ENCODE measurements at regions of chr2 and their contacts with region 1.

Region 1: DNA sequence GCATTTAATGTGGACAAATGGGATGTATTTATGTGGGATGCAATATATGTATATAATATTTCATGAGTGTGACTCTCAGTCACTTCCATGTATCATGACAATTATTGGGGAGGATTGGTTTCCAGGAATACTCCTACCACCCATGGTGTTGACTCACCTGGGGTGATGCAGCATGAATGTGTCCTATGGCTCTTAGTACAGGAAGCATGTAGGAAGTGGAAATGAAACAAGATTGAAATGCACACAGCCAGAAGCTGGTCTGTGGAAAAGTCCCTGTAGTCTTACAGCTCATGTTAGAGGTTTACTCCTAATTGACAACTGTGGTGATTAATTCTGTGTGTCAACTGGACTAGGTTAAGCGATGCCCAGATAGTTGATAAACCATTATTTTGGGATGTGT is 89.3 kb upstream of the HAAO start:
- DNase-seq: no peak
- H3K4me3 ChIP-seq: no peak overlapping the region
- CTCF ChIP-seq: no peak

Region 2: DNA sequence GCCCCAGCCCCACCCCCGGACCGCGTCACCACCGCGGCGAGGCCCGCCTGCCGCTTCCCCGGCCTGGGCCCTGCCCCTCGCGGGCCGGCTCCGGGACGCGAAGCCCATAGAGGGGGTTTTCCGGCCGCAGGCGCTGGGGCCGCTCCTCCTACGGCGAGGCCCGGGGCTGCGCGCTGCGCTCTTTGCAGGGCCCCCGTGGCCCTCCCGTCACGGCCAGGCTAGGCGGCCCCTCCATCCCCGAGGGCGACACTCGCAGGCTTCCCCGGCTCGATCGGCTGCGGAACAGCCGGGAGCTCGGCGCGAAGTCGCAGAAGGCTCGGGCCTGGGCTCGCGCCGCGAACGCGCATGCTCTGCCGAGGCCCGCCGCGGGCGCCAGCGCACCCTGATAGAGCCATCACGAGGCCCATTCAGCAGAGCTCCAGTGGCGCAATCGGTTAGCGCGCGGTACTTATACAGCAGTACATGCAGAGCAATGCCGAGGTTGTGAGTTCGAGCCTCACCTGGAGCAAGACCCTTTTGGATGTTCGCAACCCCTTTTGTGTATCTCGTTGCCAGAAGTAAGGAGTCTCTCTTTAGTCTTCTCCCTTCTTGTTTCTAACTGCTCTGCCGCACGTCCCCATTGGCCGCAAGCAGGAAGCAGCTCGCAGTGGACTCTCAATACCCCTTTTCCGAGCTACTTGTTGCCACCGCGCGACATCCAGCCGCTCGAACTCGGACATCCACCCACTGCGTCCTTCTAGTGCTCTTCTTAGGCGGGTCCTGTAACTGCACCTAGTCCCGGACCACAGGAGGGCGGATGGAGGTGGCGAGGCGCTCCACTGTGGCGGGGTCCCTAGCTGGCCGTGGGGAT is 71.4 kb before region 1 on chr2:
- in situ Hi-C with region 1: loop called (anchors 10 kb)
- DNase-seq: peak; percentile 89
- H3K4me3 ChIP-seq: peak overlapping the region; percentile 52
- CTCF ChIP-seq: no peak

Region 3: DNA sequence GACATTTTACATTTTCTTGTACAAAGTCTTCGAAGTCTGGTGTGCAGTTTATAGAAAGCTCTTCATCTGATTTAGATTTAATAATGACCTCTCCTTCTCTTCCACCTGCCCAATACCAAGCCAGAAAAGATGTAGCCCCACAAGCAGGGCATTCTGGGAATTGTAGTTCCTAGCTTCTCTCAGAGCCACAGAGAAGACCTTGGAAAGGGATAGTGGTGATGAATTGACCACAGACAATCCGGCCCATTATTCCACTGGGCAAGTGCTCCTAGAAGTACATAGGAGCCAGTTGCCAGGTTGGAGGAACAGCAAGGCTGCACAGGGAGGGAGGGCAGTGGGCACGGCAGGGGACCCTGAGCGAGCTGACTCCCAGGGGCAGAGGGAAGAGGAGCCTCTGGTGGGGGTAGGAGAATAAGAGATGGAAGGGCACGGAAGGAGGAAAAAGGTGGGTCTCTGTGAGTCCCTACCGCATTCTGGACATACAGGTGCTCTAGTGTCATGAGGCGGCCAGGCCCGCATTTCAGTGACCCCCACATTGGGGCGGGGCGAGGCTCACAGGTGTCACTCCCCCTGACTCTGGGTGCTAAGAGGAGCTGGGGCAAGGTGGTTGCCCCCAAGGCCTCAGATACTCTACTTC is 63.2 kb after region 1 on chr2:
- in situ Hi-C with region 1: loop called (anchors 5 kb)
- DNase-seq: no peak
- H3K4me3 ChIP-seq: no peak overlapping the region
- CTCF ChIP-seq: no peak

Measured in astrocyte of the cerebellum (primary cell).